Sciatic nerve (tissue), 2 donors: ENCODE measurements at regions of chr6 and their contacts with region 1.

Region 1: GRCh38 chr6:131909408-131910218 is 41.6 kb downstream of the CCN2 start:
- DNase-seq: peak; percentile 89
- ATAC-seq: peak; percentile 83

Region 2: GRCh38 chr6:131669891-131670290 is 239.7 kb before region 1 on chr6:
- intact Hi-C with region 1: no loop called
- DNase-seq: no peak
- ATAC-seq: no peak

Region 3: DNA sequence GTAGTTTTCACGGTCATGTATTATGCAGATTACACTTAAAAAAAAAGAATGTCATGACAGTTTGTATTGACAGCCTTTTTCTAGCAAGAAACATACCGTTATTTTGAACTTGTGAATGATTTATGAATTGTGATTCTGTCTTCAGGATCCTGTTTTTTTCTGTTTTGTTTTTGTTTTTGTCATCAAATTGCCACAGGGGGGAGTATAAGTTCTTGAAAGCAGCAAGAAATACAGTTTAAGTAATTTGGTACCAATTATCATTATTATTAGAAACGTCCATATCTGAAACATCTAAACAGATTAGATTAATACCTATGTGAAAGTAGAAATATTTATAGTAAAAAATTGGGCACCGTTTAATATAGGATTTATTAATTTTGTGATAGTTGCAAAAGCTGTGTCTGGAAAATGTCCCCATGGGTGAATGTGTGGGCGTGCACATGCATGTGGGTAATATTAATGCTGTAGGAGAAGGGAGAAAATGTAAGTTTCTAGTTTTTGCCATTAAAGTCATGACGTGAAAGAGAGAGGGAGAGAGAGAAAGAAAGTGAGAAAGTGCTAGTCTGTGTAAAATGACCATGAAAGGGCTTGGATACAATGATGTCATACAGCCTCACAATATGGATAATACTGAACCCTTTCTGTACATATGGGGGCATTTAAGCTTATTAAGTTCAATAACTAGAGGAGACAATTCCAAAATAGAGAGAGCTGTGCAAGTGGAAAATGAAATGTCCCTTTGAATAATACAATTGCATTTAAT is 50.9 kb after region 1 on chr6:
- intact Hi-C with region 1: no loop called
- DNase-seq: no peak
- ATAC-seq: no peak

Region 4: GRCh38 chr6:132218059-132218696 is 308.6 kb after region 1 on chr6:
- intact Hi-C with region 1: loop called (anchors 10 kb)
- DNase-seq: no peak
- ATAC-seq: peak; percentile 61